ENCODE measurements at regions of chr10 and their contacts with region 1.

Region 1: DNA sequence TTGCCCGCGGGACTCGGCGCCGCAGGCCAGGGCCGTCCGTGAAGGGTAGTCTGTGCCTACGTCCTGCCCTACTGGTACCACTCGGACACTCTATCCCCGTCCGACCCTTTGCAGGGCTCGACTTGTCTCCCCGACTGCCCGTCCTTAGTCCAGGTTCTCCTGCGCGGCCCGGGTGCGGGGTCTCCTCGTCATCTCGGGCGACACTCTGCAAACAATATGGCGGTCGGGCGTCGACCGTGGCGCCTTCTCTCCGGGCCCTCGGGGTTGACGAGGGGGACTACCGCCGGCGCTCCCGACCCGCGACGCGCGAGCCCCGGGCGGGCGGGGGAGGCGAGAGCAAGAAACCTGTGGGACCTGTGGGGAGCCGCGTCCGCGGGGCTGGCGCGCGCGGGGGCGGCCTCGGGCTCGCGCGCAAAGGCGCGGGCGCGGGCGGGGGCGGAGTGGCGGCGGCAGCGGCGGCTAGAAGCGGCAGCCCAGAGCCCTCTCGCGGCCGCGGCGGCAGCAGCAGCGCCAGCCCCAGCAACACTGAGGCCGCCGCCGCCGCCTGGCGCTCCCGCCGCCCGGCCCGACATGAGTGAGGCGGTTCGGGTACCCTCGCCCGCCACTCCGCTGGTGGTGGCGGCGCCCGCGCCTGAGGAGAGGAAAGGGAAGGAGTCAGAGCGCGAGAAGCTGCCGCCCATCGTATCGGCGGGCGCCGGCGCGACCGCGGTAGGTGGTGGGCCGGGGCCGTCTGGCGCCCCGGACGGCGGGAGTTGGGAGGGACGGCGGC is at the start of gene HECTD2:
- DNase-seq: peak; percentile 81
- H3K4me3 ChIP-seq: peak within 1 kb of the TSS; percentile 71
- H3K27ac ChIP-seq: no peak within 1 kb of the TSS
- H3K4me1 ChIP-seq: peaks cover 9% of the 10 kb centered on the region
- CTCF ChIP-seq: peak; percentile 44; the same call in 1 of the 2 replicates
- total RNA-seq, gene HECTD2: 0.16 TPM in 1 of 2 replicates, not detected in the other

Region 2: GRCh38 chr10:91006001-91006751 is 403.9 kb before region 1 on chr10:
- CTCF ChIA-PET with region 1: no interaction called
- POLR2A ChIA-PET with region 1: no interaction called
- intact Hi-C with region 1: loop called (anchors 2 kb)
- DNase-seq: peak; percentile 65
- H3K4me3 ChIP-seq: no peak overlapping the region
- H3K27ac ChIP-seq: no peak overlapping the region
- H3K4me1 ChIP-seq: no peaks in the 10 kb centered on the region
- CTCF ChIP-seq: peak; percentile 93

Region 3: GRCh38 chr10:91298224-91298871 is 111.7 kb before region 1 on chr10:
- CTCF ChIA-PET with region 1: no interaction called
- POLR2A ChIA-PET with region 1: no interaction called
- intact Hi-C with region 1: loop called (anchors 5 kb)
- DNase-seq: peak; percentile 78
- H3K4me3 ChIP-seq: no peak overlapping the region
- H3K27ac ChIP-seq: no peak overlapping the region
- H3K4me1 ChIP-seq: no peaks in the 10 kb centered on the region
- CTCF ChIP-seq: peak; percentile 90

Region 4: DNA sequence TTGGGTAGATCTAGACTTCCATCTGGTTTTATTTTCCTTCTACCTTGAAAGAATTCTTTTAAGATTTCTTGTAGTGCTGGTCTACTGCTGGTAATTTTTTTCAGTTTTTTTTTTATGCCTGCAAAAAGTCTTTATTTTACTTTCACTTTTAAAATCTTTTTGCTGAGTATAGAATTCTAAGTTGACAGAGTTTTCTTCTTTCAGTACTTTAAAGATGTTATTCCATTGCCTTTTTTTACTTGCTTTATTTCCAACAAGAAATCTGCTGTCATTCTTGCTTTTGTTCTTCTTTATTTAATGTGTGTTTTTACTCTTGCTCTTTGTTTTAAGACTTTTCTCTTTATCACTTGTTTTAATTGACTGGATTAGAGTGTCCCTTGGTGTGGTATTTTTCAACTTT is 36.0 kb before region 1 on chr10:
- CTCF ChIA-PET with region 1: no interaction called
- POLR2A ChIA-PET with region 1: no interaction called
- intact Hi-C with region 1: no loop called
- DNase-seq: no peak
- H3K4me3 ChIP-seq: no peak overlapping the region
- H3K27ac ChIP-seq: no peak overlapping the region
- H3K4me1 ChIP-seq: no peaks in the 10 kb centered on the region
- CTCF ChIP-seq: no peak

Measured in OCI-LY7 (cell line).